ENCODE measurements at regions of chr4 and their contacts with region 1.

Region 1: DNA sequence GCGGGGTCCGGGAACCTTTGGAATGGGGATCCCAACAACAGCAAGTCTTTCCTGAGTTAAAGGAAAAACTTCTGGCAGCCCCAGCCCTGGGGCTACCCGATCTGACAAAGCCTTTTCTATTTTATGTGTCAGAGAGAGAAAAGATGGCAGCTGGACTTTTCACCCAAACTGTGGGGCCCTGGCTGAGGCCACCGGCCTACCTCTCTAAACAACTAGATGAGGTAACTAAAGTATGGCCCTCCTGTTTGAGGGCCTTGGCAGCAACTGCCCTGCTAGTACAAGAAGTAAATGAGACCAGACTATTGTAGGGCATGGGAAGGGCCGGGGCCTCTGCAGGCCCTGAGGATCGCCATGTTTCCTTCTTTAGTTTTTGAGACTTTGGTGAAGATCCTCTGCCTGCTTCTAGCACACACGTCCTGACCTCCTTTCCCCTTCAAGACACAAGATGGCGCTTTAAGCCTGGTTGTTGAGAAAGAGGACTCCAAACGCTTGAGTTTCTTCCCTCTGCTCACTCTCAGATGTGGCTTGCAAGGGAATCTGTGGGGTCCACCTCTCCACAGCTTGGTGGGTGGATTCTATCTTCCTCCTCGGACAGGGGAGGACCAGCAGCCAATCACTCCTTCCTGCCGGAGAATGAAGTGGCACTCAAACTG is 18.5 kb upstream of the DRD5 start:
- DNase-seq: no peak
- H3K4me3 ChIP-seq: no peak overlapping the region
- H3K27ac ChIP-seq: no peak overlapping the region
- H3K4me1 ChIP-seq: no peaks in the 10 kb centered on the region
- H3K27me3 ChIP-seq: peaks cover 0 to 37% (median 0%) of the 10 kb centered on the region in 7 donors
- CTCF ChIP-seq: peak; percentile 19 to 70 (median 49)
- POLR2A ChIP-seq: no peak

Region 2: DNA sequence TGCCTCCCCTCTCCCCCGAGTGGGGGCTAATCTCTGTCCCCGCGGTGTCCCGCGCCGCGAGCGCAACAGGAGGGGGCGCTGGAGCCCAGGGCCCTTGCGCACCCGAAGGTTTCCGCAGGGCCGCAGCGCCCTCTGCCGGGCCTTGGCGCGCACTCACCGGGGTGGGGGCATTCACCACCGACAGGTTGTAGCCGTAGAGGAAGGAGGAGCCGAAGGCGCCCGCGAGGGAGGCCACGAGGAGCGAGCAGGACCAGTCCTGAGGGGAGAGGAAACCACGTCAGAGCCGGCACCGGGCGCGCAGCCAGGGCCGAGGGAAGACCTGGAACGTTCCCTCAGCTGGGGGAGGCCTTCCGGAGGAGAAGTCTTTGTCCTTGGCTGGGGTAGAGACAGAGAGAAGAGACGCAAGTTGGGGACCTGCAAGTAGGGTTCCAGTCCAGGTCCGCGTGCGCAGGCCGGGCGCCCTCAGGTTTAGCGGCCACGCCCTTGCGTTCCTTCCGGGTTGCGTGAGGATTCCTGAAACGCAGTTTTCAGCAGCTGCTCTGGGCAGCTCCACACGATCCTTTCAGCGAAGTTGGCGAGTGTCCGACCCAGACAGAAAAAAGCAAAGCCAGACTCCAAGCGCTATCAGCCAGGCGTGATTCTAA is 256.0 kb after region 1 on chr4:
- intact Hi-C with region 1: loop called (anchors 10 kb)
- DNase-seq: peak; percentile 98
- H3K4me3 ChIP-seq: peak overlapping the region in 7 of 8 donors; percentile 27 to 68 (median 36)
- H3K27ac ChIP-seq: peak overlapping the region; percentile 50 to 87 (median 76)
- H3K4me1 ChIP-seq: peaks cover 6 to 60% (median 39%) of the 10 kb centered on the region in 6 donors
- H3K27me3 ChIP-seq: peaks cover 0 to 18% (median 0%) of the 10 kb centered on the region in 7 donors
- CTCF ChIP-seq: peak; percentile 90 to 99 (median 97)
- POLR2A ChIP-seq: peak in 1 of 3 donors; percentile 23

Region 3: DNA sequence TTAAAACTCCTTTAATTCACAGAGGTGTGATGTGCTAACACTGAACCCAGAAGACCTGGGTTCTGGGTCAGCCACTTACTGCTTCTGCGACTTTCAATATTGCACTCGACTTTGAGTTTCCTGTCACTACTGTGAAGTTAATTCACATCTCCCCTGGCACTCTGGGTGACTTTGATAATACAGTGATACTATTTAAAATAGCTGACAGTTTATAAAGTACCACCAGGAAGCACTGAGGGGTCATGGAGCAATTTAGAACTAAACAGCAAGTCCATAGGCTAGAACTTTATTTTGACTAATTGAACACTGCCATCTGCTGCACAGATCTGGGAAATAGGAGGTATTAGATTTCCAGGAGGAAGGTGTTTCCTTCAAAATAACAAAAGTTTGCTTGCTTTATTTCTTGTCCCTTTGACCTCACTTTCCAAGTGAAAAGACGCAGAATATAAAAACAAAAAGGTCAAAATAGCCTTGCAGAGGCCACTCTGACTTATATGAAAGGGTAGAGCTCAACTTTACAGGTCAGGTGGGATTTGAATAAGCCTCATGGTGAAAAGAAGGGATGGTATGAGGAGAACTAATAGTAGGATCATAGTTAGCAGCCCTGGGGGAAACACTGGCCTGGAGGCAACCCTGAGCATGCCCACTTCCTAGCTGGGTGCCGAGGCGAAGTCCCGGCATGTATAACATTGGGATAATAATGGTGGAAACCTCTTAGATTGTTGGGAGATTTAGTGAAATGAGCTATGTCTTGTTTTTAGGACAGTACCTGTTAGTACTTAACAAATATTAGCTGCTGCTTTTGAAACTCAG is 640.9 kb after region 1 on chr4:
- intact Hi-C with region 1: loop called (anchors 5 kb)
- DNase-seq: no peak
- H3K4me3 ChIP-seq: no peak overlapping the region
- H3K27ac ChIP-seq: no peak overlapping the region
- H3K4me1 ChIP-seq: no peaks in the 10 kb centered on the region
- H3K27me3 ChIP-seq: no peaks in the 10 kb centered on the region
- CTCF ChIP-seq: peak in 5 of 11 experiments; percentile 17 to 50 (median 40)
- POLR2A ChIP-seq: no peak